Breast epithelium (tissue), 4 donors: ENCODE measurements at regions of chr15 and their contacts with region 1.

Region 1: GRCh38 chr15:96849271-96849900 is 518.9 kb downstream of the NR2F2 start:
- DNase-seq: no peak
- H3K4me3 ChIP-seq: no peak overlapping the region
- H3K27ac ChIP-seq: no peak overlapping the region
- H3K4me1 ChIP-seq: no peaks in the 10 kb centered on the region
- H3K27me3 ChIP-seq: peaks cover 0 to 3% of the 10 kb centered on the region in 2 donors
- CTCF ChIP-seq: no peak
- POLR2A ChIP-seq: no peak

Region 2: DNA sequence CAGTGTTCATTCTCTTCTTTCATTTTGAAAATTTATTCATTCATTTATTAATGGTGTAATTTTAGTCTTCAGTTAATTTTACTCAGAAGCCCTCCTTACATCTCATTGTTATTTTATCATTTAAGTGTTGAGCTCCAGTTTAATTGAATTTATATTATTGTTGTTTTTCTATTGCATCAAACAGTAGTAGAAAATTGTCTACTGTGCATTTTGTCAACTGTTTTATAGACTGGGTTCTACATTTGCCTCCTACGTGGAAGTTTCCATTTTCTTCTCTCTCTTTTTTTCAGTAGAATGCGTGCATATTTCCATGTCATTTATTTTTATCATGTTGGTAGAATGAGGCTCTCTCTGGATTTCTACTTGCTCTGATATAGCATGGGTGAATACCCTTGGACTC is 31.5 kb before region 1 on chr15:
- intact Hi-C with region 1: loop called (anchors 1 kb)
- DNase-seq: no peak
- H3K4me3 ChIP-seq: no peak overlapping the region
- H3K27ac ChIP-seq: no peak overlapping the region
- H3K4me1 ChIP-seq: no peaks in the 10 kb centered on the region
- H3K27me3 ChIP-seq: peaks cover 0 to 14% of the 10 kb centered on the region in 2 donors
- CTCF ChIP-seq: no peak
- POLR2A ChIP-seq: no peak